MCF 10A (cell line): ENCODE measurements at regions of chr1 and their contacts with region 1.

Region 1: GRCh38 chr1:209565759-209566678 is 17.5 kb upstream of the CAMK1G start:
- DNase-seq: peak; percentile 97
- H3K4me3 Mint-ChIP-seq: peak overlapping the region; percentile 49
- H3K27ac Mint-ChIP-seq: no peak overlapping the region
- H3K4me1 Mint-ChIP-seq: peaks cover 62% of the 10 kb centered on the region
- H3K27me3 Mint-ChIP-seq: peaks cover 3% of the 10 kb centered on the region
- CTCF ChIP-seq: peak; percentile 98

Region 2: GRCh38 chr1:209207701-209208286 is 358.2 kb before region 1 on chr1:
- CTCF ChIA-PET with region 1: interaction called, 50 read pairs
- POLR2A ChIA-PET with region 1: interaction called, 4 read pairs
- intact Hi-C with region 1: loop called (anchors 1 kb)
- DNase-seq: peak; percentile 83
- H3K4me3 Mint-ChIP-seq: peak overlapping the region; percentile 62
- H3K27ac Mint-ChIP-seq: no peak overlapping the region
- H3K4me1 Mint-ChIP-seq: no peaks in the 10 kb centered on the region
- H3K27me3 Mint-ChIP-seq: peaks cover 6% of the 10 kb centered on the region
- CTCF ChIP-seq: peak; percentile 98

Region 3: GRCh38 chr1:209405183-209405814 is 160.7 kb before region 1 on chr1:
- CTCF ChIA-PET with region 1: interaction called, 13 read pairs
- POLR2A ChIA-PET with region 1: interaction called, 24 read pairs
- intact Hi-C with region 1: no loop called
- DNase-seq: peak; percentile 81
- H3K4me3 Mint-ChIP-seq: peak overlapping the region; percentile 17
- H3K27ac Mint-ChIP-seq: no peak overlapping the region
- H3K4me1 Mint-ChIP-seq: peaks cover 16% of the 10 kb centered on the region
- H3K27me3 Mint-ChIP-seq: no peaks in the 10 kb centered on the region
- CTCF ChIP-seq: no peak

Region 4: DNA sequence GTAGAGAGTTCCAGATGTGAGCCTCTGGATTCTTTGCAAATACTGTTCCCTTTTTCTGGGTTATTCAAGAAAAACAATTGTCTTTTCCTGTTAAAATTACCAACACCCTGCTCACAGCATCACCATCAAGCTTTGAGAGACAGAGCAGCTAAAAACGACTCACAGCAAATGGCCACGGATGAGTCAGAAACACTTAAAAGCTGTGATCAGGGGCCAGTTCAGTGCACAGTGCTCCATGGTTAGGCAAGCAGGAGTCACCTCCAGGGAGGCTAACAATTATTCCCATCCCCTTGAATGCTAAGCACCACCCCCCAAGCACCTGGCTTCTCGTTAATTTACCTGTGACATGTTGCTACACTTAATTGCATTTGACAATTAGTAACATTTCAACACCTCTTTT is 110.9 kb before region 1 on chr1:
- CTCF ChIA-PET with region 1: interaction called, 37 read pairs
- POLR2A ChIA-PET with region 1: interaction called, 4 read pairs
- intact Hi-C with region 1: loop called (anchors 1 kb)
- DNase-seq: peak; percentile 44
- H3K4me3 Mint-ChIP-seq: no peak overlapping the region
- H3K27ac Mint-ChIP-seq: no peak overlapping the region
- H3K4me1 Mint-ChIP-seq: peaks cover 32% of the 10 kb centered on the region
- H3K27me3 Mint-ChIP-seq: peaks cover 25% of the 10 kb centered on the region
- CTCF ChIP-seq: no peak

Region 5: DNA sequence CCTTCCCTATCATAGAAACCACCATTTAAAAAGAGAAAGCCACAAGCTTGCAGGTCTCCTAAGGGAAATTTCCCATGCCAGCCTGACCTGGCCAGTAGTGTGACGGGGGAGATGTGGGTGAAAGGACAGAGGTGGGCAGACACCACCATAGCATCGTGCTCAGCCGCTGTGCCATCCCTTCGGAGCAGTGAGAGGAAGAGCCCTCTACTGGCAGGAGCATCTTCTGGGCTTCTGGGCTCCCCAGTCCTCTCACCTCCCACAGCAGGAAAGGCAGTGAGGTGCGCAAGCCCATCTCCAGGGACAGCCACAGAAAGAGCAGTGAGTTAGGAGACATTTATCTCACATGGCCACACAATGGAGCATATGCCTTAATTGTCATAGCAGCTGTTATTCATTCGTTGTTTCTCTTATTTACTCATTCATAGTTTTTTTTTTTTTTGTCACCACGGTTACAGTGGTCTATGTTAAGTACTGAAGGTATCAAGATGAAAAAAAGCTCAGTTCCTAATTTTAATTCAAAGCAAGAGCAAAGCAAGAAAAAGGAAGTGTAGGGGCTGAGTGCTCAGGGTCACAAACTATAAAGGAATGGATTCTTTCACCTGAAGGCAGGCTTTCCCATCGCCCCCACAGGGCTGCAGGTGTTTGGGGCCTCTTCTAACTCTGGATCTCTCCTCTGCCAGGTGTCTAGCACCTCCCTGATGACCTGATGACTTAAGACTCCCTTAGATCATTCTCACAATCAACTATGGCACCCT is 31.3 kb before region 1 on chr1:
- CTCF ChIA-PET with region 1: interaction called, 144 read pairs
- POLR2A ChIA-PET with region 1: interaction called, 120 read pairs
- intact Hi-C with region 1: no loop called
- DNase-seq: no peak
- H3K4me3 Mint-ChIP-seq: no peak overlapping the region
- H3K27ac Mint-ChIP-seq: no peak overlapping the region
- H3K4me1 Mint-ChIP-seq: peaks cover 55% of the 10 kb centered on the region
- H3K27me3 Mint-ChIP-seq: no peaks in the 10 kb centered on the region
- CTCF ChIP-seq: no peak

Region 6: GRCh38 chr1:209607102-209607794 is 41.2 kb after region 1 on chr1:
- CTCF ChIA-PET with region 1: interaction called, 198 read pairs
- POLR2A ChIA-PET with region 1: interaction called, 6 read pairs
- intact Hi-C with region 1: no loop called
- DNase-seq: peak; percentile 92
- H3K4me3 Mint-ChIP-seq: no peak overlapping the region
- H3K27ac Mint-ChIP-seq: peak overlapping the region; percentile 81
- H3K4me1 Mint-ChIP-seq: no peaks in the 10 kb centered on the region
- H3K27me3 Mint-ChIP-seq: no peaks in the 10 kb centered on the region
- CTCF ChIP-seq: no peak

Region 7: GRCh38 chr1:209747580-209748262 is 181.7 kb after region 1 on chr1:
- CTCF ChIA-PET with region 1: interaction called, 77 read pairs
- POLR2A ChIA-PET with region 1: interaction called, 10 read pairs
- intact Hi-C with region 1: loop called (anchors 1 kb)
- DNase-seq: peak; percentile 100
- H3K4me3 Mint-ChIP-seq: no peak overlapping the region
- H3K27ac Mint-ChIP-seq: no peak overlapping the region
- H3K4me1 Mint-ChIP-seq: peaks cover 23% of the 10 kb centered on the region
- H3K27me3 Mint-ChIP-seq: no peaks in the 10 kb centered on the region
- CTCF ChIP-seq: peak; percentile 98